MCF 10A (cell line): ENCODE measurements at regions of chr18 and their contacts with region 1.

Region 1: GRCh38 chr18:12287684-12288402 is 20.2 kb upstream of the TUBB6 start:
- DNase-seq: peak; percentile 78
- H3K4me3 Mint-ChIP-seq: peak overlapping the region; percentile 82
- H3K27ac Mint-ChIP-seq: peak overlapping the region; percentile 99
- H3K4me1 Mint-ChIP-seq: peaks cover 22% of the 10 kb centered on the region
- H3K27me3 Mint-ChIP-seq: no peaks in the 10 kb centered on the region
- CTCF ChIP-seq: no peak

Region 2: DNA sequence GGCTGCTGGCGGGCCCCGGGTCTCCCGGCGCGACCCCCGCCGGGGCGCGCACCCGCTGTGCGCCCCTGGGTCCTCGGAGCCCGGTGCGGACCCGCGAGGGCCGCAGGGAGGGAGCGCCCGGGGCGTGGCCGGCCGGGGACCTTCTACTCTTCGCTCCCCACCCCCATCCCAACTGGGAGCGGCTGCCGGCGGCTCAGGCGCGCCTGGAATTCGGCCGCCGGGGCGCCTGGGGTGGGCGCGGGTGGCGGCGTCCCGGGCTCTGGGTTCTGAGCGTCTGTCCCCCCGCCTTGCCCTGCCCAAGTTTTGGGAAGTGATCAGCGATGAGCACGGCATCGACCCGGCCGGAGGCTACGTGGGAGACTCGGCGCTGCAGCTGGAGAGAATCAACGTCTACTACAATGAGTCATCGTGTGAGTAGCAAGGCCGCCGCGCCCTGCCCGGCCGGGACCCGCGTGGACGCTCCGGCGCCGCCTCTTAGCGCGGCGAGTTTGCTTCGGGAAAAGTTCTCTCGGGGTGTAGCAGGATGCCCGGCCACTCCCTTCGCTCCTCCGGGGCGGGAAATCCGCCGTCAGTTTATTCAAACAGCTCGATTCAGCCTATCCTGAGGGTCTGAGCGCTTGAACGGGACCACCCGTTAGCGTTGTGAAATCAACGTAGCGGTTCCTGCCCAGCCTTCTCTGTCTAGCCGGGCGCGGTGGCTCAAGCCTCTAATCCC is 20.7 kb after region 1 on chr18:
- CTCF ChIA-PET with region 1: interaction called, 14 read pairs
- POLR2A ChIA-PET with region 1: interaction called, 234 read pairs
- intact Hi-C with region 1: no loop called
- DNase-seq: peak; percentile 85
- H3K4me3 Mint-ChIP-seq: peak overlapping the region; percentile 86
- H3K27ac Mint-ChIP-seq: peak overlapping the region; percentile 87
- H3K4me1 Mint-ChIP-seq: peaks cover 20% of the 10 kb centered on the region
- H3K27me3 Mint-ChIP-seq: no peaks in the 10 kb centered on the region
- CTCF ChIP-seq: no peak

Region 3: DNA sequence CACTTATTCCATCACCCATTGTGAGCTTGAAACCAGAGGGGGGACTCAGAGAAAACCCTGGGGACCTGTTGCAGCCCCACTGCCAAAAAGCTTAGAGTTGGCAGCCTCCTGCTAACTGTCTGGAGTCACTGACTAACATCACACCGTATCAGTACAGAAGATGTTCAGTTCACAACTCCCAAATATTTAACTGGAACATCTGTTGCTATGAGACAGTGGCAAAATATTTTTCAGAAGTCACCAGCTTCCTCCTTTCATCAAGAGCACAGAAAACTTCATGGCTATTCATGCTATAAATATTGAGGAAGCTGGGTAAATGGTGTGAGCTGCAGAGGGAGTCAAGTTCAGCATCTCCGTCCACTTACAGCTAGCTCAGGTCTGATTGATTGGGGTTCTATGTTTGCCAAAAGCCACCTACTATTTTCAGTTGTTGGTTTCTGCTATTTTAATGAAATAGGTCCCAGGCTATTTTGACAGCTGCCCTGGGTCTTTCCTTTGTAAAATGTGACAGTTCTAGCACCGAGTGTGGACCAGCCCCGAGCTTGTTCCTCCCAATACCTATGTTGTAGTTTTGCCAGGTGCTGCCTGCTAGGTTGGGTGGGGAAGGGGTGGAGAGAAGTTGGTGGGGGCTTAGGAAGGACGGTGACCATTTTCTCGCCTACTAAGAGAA is 30.0 kb after region 1 on chr18:
- CTCF ChIA-PET with region 1: interaction called, 5 read pairs
- POLR2A ChIA-PET with region 1: interaction called, 15 read pairs
- intact Hi-C with region 1: no loop called
- DNase-seq: no peak
- H3K4me3 Mint-ChIP-seq: no peak overlapping the region
- H3K27ac Mint-ChIP-seq: peak overlapping the region; percentile 23
- H3K4me1 Mint-ChIP-seq: peaks cover 17% of the 10 kb centered on the region
- H3K27me3 Mint-ChIP-seq: no peaks in the 10 kb centered on the region
- CTCF ChIP-seq: no peak